Posterior vena cava (tissue), 2 donors: ENCODE measurements at regions of chr10 and their contacts with region 1.

Region 1: GRCh38 chr10:110820321-110820814 is 51.4 kb upstream of the PDCD4 start:
- DNase-seq: no peak

Region 2: DNA sequence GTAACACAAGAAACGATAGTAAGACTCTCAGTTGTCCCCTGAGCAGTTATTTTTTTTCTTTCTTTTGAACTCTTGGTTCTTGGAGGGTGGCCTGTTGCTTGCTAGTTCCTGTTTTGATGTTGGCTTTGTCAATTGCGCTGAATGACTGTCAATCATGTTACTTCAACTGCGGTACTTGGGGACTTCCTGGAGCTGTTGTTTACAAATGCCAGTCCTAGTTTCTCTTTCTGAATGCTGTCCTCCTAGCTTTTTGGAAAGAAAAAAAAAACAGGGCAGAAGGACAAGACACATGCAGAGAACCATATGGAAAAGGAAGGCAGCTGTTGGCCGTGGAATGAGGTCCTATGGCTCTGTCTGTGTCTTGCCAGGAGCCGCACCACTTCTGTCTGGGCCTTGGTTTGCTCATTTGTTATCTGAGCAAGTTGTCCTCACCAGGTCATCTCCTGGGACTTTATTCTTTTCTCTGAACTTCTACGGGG is 44.3 kb after region 1 on chr10:
- intact Hi-C with region 1: loop called in 1 of 2 experiments (anchors 5 kb)
- DNase-seq: no peak

Region 3: DNA sequence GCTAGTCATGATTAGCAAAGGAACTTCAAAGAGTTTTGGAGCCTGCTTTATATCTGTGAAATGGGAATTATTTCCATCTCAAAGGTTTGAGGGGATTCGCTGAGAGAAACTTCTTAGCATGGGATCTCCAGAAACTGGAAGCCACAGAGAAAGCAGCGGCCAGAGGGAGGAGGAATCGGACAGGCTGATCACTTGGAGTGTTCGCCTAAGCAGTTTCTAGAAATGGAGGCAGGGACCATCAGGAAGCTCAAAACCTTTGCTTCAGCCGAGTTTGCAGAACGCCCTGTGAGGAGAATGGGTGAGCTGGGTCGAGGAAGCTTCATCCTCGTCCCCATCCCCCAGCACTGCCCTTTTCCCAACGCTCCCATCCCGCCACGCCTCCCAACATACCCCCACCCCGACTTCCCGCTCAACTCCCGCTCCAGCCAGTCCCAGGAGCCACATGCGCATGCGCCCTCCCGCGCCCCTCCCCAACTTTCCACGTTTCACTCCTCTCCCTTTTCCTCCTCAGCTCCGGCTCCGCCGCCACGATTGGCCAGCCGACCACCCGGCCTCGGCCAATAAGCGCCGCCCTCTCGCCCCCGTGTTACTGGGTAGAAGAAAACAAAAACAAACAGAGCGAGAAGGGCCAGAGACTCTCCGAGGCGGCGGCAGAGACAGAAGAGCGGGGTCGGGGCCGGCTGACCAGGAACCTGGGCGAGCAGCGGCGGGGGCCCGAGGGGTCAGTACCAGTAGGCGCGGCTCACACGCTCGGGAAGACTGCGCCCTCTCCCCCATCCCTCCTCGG is 51.1 kb after region 1 on chr10 and contains the start of gene PDCD4:
- intact Hi-C with region 1: loop called (anchors 5 kb)
- DNase-seq: peak; percentile 100
- total RNA-seq, gene PDCD4: 54.9 to 55.0 TPM